ENCODE measurements at regions of chr10 and their contacts with region 1.

Region 1: DNA sequence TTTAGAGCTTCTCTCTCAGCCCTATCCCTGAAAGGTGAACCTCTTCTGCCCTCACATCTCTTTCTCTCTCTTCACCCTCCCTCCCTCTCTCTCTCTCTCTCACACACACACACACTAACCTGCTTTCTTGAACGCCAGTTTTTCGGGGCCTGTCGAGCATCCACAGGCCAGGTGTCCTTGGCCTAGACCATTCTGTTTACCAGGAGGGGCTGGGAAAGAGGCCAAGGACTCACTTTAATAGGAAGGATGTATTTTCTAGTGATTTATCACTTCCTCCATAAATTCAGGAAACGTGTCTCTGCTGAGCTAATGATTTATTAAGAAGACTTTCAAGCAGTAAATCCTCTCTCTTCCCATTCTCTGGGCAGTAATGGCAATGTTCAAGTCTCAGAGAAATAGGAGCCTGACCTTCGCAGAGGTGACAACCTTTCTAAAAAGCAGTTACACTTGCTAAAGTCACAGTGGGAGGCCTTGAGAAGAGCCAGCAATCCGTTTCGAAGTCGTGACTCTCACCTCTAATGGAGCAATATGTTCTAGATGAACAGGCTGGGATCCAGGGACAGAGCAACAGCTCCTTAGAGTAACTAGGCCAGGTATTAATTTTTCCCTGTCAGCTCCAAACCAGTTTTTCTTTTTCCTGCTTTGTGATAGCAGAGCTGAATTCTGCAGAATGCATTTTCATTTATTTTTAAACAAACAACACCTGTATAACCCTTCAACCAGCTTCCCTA is 1357.4 kb upstream of the SORCS1 start:
- DNase-seq: no peak
- H3K4me3 Mint-ChIP-seq: no peak overlapping the region
- H3K27ac Mint-ChIP-seq: no peak overlapping the region
- H3K4me1 Mint-ChIP-seq: no peaks in the 10 kb centered on the region
- H3K27me3 Mint-ChIP-seq: no peaks in the 10 kb centered on the region

Region 2: GRCh38 chr10:108500396-108500795 is 21.5 kb before region 1 on chr10:
- CTCF ChIA-PET with region 1: no interaction called
- POLR2A ChIA-PET with region 1: no interaction called
- DNase-seq: no peak
- H3K4me3 Mint-ChIP-seq: no peak overlapping the region
- H3K27ac Mint-ChIP-seq: no peak overlapping the region
- H3K4me1 Mint-ChIP-seq: no peaks in the 10 kb centered on the region
- H3K27me3 Mint-ChIP-seq: no peaks in the 10 kb centered on the region

Region 3: DNA sequence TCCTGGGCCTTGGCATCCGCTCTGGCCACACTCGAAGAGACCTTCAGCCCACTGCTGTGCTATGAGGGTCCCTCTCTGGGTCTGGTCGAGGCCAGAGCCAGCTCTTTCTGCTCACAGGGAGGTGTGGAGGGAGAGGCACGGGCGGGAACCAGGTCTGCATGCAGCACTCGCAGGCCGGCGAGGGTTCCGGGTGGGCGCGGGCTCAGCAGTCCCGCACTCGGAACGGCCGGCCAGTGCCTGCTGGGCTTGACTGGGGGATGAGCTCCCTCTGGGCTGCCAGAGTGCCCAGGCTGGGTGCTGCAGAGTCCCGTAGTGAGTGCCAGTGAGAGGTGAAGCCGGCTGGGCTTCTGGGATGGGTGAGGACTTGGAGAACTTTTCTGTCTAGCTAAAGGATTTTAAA is 518.7 kb after region 1 on chr10:
- CTCF ChIA-PET with region 1: no interaction called
- POLR2A ChIA-PET with region 1: interaction called, 12 read pairs
- DNase-seq: no peak
- H3K4me3 Mint-ChIP-seq: no peak overlapping the region
- H3K27ac Mint-ChIP-seq: no peak overlapping the region
- H3K4me1 Mint-ChIP-seq: no peaks in the 10 kb centered on the region
- H3K27me3 Mint-ChIP-seq: no peaks in the 10 kb centered on the region

Measured in activated CD4-positive, alpha-beta T cell treated with anti-CD3 and anti-CD28 coated beads, Interleukin-2, amount 10 ng/mL, durations not matched to agents 7 days and 5 days (primary cell).